ENCODE measurements at regions of chr16 and their contacts with region 1.

Region 1: DNA sequence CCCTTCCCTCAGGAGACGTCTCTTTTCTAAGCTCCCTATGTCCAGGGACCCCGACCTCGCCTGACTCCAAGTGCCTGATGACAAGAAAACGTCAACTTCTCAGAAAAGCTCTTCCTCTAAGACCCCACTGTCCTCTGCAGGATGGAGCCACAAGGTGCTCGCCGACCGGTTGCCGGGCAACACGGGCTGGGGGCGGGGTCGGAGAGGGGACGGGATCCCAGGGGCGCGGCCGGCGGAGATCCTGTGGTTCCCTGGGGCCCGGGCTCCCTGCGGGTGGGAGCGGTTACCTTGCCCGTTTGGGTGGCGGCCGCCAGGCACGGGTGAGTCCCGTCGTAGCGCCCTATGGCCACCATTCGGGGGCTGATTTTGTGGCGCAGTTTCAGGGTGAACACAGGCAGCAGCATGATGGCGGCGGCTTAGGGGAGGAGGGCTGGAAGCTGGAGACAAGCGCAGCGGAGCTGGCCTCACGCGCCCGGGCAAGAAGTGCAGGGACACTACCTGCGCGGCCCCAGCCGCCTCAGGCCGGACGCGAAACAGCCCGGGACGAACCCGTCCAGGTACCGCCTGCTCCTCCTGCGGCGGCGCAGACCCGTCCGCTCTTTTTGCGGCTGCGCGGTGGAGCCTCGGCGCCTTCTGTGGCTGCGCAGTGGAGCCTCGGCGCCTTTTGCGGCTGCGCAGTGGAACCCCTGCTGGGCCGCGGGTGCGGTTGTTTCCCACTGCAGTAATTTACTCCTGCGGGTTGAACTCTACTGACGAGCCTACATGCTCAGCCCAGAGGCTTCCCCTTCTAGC is at the start of gene BBS2:
- DNase-seq: peak; percentile 87 to 97 (median 92)
- ATAC-seq: peak; percentile 84
- H3K4me3 ChIP-seq: peak within 1 kb of the TSS; percentile 97
- H3K4me3 Mint-ChIP-seq: peak within 1 kb of the TSS; percentile 91
- H3K27ac ChIP-seq: peak within 1 kb of the TSS; percentile 80 to 91
- H3K27ac Mint-ChIP-seq: peak within 1 kb of the TSS; percentile 90
- H3K4me1 ChIP-seq: peaks cover 33% of the 10 kb centered on the region
- H3K4me1 Mint-ChIP-seq: peaks cover 51% of the 10 kb centered on the region
- H3K27me3 ChIP-seq: no peaks in the 10 kb centered on the region
- H3K27me3 Mint-ChIP-seq: no peaks in the 10 kb centered on the region
- CTCF ChIP-seq: no peak
- total RNA-seq, gene BBS2: 69.6 to 72.8 TPM

Region 2: DNA sequence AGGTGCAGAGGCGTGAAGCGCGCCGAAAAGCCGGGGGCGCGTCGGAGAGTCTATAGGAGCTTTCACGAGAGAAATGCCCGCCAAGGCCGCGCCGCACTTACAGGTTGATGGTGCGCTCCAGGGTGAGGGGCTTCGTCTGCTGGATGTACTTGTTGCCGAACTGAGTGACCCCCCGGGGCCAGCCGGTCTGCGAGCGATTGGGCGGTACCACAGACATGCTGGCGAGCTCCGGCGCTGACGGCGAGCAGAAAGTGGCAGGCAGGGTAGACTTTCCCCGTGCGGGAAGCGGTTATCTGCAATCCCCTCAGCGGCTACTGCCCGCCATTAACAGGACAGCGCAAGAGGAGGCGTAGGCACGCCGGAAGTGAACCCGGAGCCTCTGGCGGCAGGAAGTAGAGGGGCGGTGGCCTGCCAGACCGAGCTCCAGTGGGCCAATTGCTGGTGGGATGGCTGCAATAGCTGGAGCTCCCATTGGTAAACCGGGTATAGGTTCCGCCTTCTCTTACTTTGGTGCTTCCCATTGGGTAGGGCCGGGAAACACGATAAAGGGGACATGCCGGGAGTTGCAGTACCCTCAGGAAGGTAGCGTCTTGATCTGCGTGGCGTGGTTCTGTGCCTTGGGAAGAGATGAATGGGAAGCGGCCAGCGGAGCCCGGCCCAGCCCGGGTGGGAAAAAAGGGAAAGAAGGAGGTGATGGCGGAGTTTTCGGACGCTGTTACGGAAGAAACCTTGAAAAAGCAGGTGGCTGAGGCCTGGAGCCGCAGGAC is 68.5 kb before region 1 on chr16 and contains the starts of genes NUDT21 and OGFOD1:
- CTCF ChIA-PET with region 1: interaction called, 3 read pairs
- POLR2A ChIA-PET with region 1: interaction called, 10 read pairs
- intact Hi-C with region 1: loop called in 1 of 2 experiments (anchors 5 kb)
- DNase-seq: peak; percentile 81 to 98 (median 88)
- ATAC-seq: peak; percentile 98
- H3K4me3 ChIP-seq: peak within 1 kb of the TSS; percentile 91
- H3K4me3 Mint-ChIP-seq: peak within 1 kb of the TSS; percentile 92
- H3K27ac ChIP-seq: peak within 1 kb of the TSS; percentile 58 to 80
- H3K27ac Mint-ChIP-seq: peak within 1 kb of the TSS; percentile 83
- H3K4me1 ChIP-seq: peaks cover 20% of the 10 kb centered on the region
- H3K4me1 Mint-ChIP-seq: peaks cover 70% of the 10 kb centered on the region
- H3K27me3 ChIP-seq: no peaks in the 10 kb centered on the region
- H3K27me3 Mint-ChIP-seq: no peaks in the 10 kb centered on the region
- CTCF ChIP-seq: no peak
- total RNA-seq, gene NUDT21: 89.6 to 96.6 TPM
- total RNA-seq, gene OGFOD1: 14.6 to 14.8 TPM

Region 3: DNA sequence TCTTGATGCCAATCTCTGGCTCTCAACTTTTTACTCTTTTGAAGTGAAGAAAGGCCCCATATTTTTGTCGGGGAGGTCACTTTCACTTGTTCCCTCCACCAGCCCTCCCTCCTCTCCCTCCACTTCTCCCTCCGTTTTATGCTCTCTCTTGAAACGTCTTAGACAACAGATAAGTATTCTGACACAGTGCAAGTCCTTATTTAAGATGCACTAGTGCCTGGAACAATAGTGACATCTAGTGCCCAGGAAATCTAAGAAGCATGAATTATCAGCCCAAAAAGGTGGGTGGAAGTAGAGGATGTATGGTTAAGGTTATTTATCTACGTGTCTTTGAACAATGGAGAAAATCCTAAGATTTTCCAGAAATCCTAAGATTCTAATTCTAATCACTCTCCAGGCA is 648.3 kb after region 1 on chr16:
- CTCF ChIA-PET with region 1: no interaction called
- POLR2A ChIA-PET with region 1: no interaction called
- intact Hi-C with region 1: no loop called
- DNase-seq: peak in 4 of 14 experiments; percentile 24 to 84 (median 80)
- ATAC-seq: peak; percentile 98
- H3K4me3 ChIP-seq: no peak overlapping the region
- H3K4me3 Mint-ChIP-seq: no peak overlapping the region
- H3K27ac ChIP-seq: no peak overlapping the region
- H3K27ac Mint-ChIP-seq: no peak overlapping the region
- H3K4me1 ChIP-seq: peaks cover 5% of the 10 kb centered on the region
- H3K4me1 Mint-ChIP-seq: peaks cover 27% of the 10 kb centered on the region
- H3K27me3 ChIP-seq: no peaks in the 10 kb centered on the region
- H3K27me3 Mint-ChIP-seq: no peaks in the 10 kb centered on the region
- CTCF ChIP-seq: peak; percentile 75

Measured in CD4-positive, alpha-beta T cell (primary cell).